Left ventricle myocardium inferior (tissue), 1 donor: ENCODE measurements at regions of chr5 and their contacts with region 1.

Region 1: DNA sequence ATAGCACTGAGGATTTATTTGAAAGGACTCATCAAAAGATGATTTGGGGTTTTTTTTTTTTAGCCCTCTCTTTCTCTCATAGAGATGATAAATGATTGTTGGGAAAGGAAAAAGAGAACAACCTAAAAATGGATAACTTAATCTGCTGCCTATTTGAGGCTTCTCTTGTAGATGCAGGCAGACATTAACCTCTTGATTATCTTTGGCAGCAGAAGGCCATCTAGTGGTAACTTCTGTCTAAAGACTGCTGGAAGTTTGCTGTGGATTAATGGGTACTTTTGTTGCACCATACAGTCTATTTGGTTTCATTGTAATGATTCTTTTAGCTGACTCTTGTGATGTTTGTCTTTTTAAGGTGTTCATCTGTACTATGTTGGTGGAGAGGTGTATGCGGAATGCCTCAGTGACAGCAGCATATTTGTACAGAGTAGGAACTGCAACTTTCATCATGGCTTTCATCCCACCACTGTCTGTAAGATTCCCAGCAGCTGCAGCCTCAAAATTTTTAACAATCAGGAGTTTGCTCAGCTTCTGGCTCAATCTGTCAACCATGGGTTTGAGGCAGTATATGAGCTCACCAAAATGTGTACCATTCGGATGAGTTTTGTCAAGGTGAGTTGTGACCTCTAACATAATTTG is 18.8 kb downstream of the SMIM32 start:
- DNase-seq: no peak
- H3K4me3 ChIP-seq: no peak overlapping the region
- H3K27ac ChIP-seq: no peak overlapping the region
- H3K4me1 ChIP-seq: peaks cover 13% of the 10 kb centered on the region
- H3K27me3 ChIP-seq: no peaks in the 10 kb centered on the region
- CTCF ChIP-seq: peak; percentile 81

Region 2: GRCh38 chr5:136087961-136088871 is 85.9 kb before region 1 on chr5:
- intact Hi-C with region 1: loop called (anchors 5 kb)
- DNase-seq: peak; percentile 86
- H3K4me3 ChIP-seq: peak overlapping the region; percentile 26
- H3K27ac ChIP-seq: peak overlapping the region; percentile 92
- H3K4me1 ChIP-seq: peaks cover 63% of the 10 kb centered on the region
- H3K27me3 ChIP-seq: no peaks in the 10 kb centered on the region
- CTCF ChIP-seq: no peak

Region 3: DNA sequence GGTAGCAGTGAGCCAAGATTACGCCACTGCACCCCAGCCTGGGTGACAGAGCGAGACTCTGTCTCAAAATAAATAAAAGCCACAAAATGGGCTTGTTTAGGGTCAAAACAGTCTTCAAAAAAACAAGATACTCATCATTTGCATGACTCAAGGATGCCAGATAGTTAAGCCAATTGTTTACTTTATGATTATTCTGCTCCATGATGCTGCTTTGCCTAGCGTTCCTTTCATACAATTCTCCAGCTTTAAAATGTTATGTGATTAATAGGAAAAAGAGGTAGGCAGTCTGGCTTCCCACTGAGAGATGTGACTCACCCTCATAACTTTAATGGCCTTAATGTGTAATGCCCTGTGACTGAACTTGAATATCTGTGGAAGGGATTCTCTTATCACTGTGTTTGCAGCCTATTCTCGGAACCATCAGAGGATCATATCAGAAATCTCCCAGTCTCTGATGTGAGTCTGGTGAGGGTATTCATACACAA is 555.8 kb after region 1 on chr5:
- intact Hi-C with region 1: no loop called
- DNase-seq: no peak
- H3K4me3 ChIP-seq: no peak overlapping the region
- H3K27ac ChIP-seq: no peak overlapping the region
- H3K4me1 ChIP-seq: no peaks in the 10 kb centered on the region
- H3K27me3 ChIP-seq: peaks cover 24% of the 10 kb centered on the region
- CTCF ChIP-seq: no peak